ENCODE measurements at regions of chr7 and their contacts with region 1.

Region 1: DNA sequence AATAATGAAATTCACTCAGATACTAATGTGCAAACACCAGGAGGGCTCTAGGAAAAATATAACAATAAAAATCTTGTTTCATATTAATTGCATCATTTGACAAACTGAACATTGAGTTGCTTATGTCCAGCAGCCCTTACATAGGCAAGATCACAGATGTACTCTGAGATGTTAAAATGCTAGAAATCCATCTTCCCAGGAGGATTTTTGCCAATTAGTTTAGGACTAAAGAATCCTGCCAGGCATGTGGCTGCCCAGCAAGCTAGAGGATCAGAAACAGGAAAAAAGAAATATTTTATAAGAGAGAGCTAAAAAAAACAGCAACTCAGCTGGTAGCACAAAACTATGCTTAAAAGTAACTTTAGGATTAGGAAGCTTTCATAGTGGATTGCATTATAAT is 407.8 kb downstream of the NXPH1 start:
- DNase-seq: no peak
- ATAC-seq: no peak
- H3K4me3 ChIP-seq: no peak overlapping the region
- H3K27ac ChIP-seq: no peak overlapping the region
- H3K4me1 ChIP-seq: no peaks in the 10 kb centered on the region
- H3K27me3 ChIP-seq: no peaks in the 10 kb centered on the region
- CTCF ChIP-seq: no peak

Region 2: GRCh38 chr7:8564281-8564680 is 276.9 kb before region 1 on chr7:
- CTCF ChIA-PET with region 1: no interaction called
- POLR2A ChIA-PET with region 1: no interaction called
- intact Hi-C with region 1: no loop called
- DNase-seq: no peak
- ATAC-seq: no peak
- H3K4me3 ChIP-seq: no peak overlapping the region
- H3K27ac ChIP-seq: no peak overlapping the region
- H3K4me1 ChIP-seq: no peaks in the 10 kb centered on the region
- H3K27me3 ChIP-seq: no peaks in the 10 kb centered on the region
- CTCF ChIP-seq: no peak

Region 3: GRCh38 chr7:8817448-8818036 is 23.6 kb before region 1 on chr7:
- CTCF ChIA-PET with region 1: no interaction called
- POLR2A ChIA-PET with region 1: no interaction called
- intact Hi-C with region 1: loop called (anchors 1 kb)
- DNase-seq: no peak
- ATAC-seq: no peak
- H3K4me3 ChIP-seq: no peak overlapping the region
- H3K27ac ChIP-seq: no peak overlapping the region
- H3K4me1 ChIP-seq: no peaks in the 10 kb centered on the region
- H3K27me3 ChIP-seq: no peaks in the 10 kb centered on the region
- CTCF ChIP-seq: no peak

Measured in PC-3 (cell line).